ENCODE measurements at regions of chr17 and their contacts with region 1.

Region 1: DNA sequence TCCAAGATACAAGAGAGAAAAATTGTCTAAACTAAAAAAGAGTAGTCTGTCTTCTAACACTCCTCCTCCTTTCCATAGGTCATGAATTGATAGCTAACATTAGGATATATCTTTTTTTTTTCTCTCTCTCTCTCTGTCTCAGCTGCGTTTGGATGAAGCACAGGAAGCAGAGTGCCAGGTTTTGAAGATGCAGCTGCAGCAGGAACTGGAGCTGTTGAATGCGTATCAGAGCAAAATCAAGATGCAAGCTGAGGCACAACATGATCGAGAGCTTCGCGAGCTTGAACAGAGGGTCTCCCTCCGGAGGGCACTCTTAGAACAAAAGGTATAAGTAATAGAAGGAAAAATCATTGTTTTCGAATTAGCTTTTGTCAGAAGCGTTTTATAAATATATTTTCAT is 32.9 kb downstream of the ABHD15 start:
- DNase-seq: no peak
- ATAC-seq: no peak
- H3K4me3 ChIP-seq: no peak overlapping the region
- H3K27ac ChIP-seq: no peak overlapping the region
- H3K4me1 ChIP-seq: peaks cover 6% of the 10 kb centered on the region
- H3K27me3 ChIP-seq: no peaks in the 10 kb centered on the region
- CTCF ChIP-seq: no peak
- EP300 ChIP-seq: no peak
- POLR2A ChIP-seq: no peak
- RAD21 ChIP-seq: no peak

Region 2: GRCh38 chr17:29369831-29370735 is 163.9 kb before region 1 on chr17:
- CTCF ChIA-PET with region 1: interaction called, 6 read pairs
- POLR2A ChIA-PET with region 1: no interaction called
- in situ Hi-C with region 1: no loop called
- intact Hi-C with region 1: loop called (anchors 2 kb)
- DNase-seq: peak; percentile 65
- ATAC-seq: peak; percentile 88
- H3K4me3 ChIP-seq: no peak overlapping the region
- H3K27ac ChIP-seq: no peak overlapping the region
- H3K4me1 ChIP-seq: no peaks in the 10 kb centered on the region
- H3K27me3 ChIP-seq: no peaks in the 10 kb centered on the region
- CTCF ChIP-seq: peak; percentile 79
- EP300 ChIP-seq: no peak
- POLR2A ChIP-seq: no peak
- RAD21 ChIP-seq: peak; percentile 49; the same call in 1 of the 2 replicates